Panc1 (cell line): ENCODE measurements at regions of chr15 and their contacts with region 1.

Region 1: DNA sequence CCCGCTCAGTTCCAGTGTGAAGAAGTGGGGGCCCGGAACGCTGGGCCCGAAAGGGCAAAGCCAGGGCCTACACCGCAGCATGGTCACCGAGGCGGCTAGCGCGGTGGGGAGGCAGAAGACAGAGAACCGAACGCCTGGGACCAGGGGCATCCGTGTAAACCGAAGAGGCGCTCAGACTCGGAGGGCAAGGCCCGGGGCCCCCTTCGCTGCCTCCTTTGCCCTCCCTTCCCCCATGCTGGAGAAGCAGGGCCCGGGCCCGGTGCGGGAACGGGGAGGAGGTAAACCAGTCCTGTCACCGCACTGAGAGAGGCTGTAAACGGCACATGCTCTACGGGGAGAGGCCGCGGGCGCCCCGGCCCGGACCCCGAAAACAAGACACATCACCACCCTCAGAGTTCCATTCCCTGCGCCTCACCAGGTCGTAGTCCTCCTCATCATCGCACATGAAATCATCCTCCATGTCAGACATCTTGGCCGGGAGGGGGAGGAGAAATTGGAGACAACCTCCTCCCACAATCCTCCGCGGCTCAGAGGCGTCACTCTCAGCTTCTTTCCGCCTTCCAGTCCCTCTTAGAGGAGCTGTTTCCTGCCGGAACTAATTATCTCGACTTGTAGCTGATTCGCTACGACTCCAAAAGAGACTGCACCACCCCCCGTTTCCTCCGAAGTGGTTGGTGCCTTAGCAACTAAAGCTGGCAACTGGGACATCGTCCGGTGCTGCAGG is at the start of gene COPS2:
- DNase-seq: peak; percentile 98
- ATAC-seq: peak; percentile 98
- H3K4me3 ChIP-seq: peak within 1 kb of the TSS; percentile 97 to 98
- H3K27ac ChIP-seq: peak within 1 kb of the TSS; percentile 93
- H3K4me1 ChIP-seq: peaks cover 3% of the 10 kb centered on the region; the same call in 1 of the 2 replicates
- H3K27me3 ChIP-seq: no peaks in the 10 kb centered on the region
- CTCF ChIP-seq: no peak
- total RNA-seq, gene COPS2: 69.4 TPM

Region 2: DNA sequence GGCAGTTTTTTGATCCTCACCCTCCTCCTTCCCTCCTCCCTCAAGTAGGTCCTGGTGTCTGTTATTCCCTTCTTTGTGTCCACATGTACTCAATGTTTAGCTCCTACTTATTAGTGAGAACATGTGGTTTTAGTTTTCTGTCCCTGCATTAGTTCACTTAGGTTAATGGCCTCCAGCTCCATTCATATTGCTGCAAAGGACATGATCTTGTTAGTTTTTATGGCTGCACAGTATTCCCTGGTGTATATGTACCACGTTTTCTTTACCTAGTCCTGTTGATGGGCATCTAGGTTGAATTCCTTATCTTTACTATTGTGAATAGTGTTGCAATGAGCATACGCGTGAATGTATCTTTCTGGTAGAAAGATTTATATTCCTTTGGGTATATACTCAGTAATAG is 206.1 kb after region 1 on chr15:
- CTCF ChIA-PET with region 1: no interaction called
- POLR2A ChIA-PET with region 1: no interaction called
- in situ Hi-C with region 1: no loop called
- intact Hi-C with region 1: no loop called
- DNase-seq: no peak
- ATAC-seq: no peak
- H3K4me3 ChIP-seq: no peak overlapping the region
- H3K27ac ChIP-seq: no peak overlapping the region
- H3K4me1 ChIP-seq: no peaks in the 10 kb centered on the region
- H3K27me3 ChIP-seq: no peaks in the 10 kb centered on the region
- CTCF ChIP-seq: no peak

Region 3: DNA sequence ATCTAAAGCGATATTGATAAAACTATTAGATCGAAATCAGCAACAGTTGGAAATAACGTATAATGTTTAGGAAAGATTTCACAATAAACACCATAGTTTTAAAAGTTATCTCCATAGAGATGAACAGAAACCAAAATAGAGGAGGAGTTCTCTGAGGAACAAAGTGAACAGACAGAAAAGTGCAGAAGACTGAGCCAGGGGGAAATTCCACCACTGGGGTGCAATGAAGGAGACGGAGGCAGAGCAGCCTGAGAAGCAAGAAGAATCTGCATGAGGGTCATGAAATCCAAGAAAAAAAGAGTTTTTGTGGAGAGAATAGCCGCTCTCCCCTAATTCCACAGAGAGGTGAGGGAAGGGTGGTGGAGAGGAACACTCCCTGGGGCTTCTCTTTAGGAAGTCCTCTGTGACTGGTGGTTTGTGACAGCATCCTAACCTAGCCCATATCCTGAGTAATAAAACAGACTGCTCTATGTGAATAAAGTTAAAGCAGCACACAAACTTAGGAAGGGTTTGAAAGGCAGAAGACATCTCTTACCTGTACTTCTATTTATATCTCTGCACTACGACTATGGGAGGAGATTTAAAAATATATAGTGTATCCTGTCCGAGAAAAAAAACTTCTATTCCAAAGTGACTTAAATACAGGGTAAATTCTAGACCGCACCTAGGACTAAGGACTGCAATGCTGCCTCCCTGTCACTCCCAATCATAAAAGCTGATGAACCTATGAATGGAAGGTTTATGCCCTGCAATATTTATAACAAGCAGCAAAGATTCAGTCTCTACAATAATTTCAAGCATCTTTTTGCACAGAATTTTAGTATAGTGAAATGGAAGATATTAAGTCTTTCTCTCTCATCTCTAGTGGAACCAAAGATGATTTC is 940.9 kb after region 1 on chr15:
- CTCF ChIA-PET with region 1: no interaction called
- POLR2A ChIA-PET with region 1: interaction called, 10 read pairs
- in situ Hi-C with region 1: no loop called
- intact Hi-C with region 1: no loop called
- DNase-seq: no peak
- ATAC-seq: no peak
- H3K4me3 ChIP-seq: no peak overlapping the region
- H3K27ac ChIP-seq: no peak overlapping the region
- H3K4me1 ChIP-seq: no peaks in the 10 kb centered on the region
- H3K27me3 ChIP-seq: no peaks in the 10 kb centered on the region
- CTCF ChIP-seq: no peak